AG04449 (cell line): ENCODE measurements at regions of chr6 and their contacts with region 1.

Region 1: DNA sequence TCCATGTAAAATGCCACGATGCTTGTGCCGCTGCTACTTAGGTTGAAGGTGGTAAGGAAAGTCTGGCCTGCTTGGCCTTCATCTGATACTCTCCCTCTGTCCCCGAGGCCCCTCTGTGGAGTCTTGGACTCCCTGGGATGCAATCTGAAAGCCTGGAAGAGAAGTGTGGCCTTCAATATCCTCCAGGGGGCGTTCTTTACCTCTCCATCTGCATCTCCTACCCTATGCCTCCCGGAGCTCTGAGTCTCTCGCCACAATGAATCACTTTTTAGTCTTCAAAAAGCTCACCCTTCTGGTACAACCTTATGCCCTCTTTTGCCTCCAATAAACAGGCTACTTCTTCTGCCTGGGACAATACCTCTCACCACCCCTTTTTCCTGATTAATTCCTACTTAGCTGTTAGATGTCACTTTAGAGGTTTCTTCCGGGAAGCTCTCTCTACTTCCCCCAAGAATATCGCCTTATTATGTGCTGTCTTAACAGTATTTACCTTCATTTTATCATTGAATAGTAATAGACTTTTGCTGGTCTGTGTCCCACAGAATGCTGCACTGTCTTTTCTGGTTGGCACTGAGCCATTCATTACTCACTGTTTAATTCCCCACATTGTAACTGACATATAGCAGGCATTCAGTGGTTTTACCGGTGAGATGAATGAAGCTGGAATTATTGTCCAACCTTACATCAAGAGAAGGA is 13.9 kb upstream of the ATG5 start:
- DNase-seq: peak; percentile 24
- H3K4me3 ChIP-seq: no peak overlapping the region
- CTCF ChIP-seq: peak; percentile 81

Region 2: DNA sequence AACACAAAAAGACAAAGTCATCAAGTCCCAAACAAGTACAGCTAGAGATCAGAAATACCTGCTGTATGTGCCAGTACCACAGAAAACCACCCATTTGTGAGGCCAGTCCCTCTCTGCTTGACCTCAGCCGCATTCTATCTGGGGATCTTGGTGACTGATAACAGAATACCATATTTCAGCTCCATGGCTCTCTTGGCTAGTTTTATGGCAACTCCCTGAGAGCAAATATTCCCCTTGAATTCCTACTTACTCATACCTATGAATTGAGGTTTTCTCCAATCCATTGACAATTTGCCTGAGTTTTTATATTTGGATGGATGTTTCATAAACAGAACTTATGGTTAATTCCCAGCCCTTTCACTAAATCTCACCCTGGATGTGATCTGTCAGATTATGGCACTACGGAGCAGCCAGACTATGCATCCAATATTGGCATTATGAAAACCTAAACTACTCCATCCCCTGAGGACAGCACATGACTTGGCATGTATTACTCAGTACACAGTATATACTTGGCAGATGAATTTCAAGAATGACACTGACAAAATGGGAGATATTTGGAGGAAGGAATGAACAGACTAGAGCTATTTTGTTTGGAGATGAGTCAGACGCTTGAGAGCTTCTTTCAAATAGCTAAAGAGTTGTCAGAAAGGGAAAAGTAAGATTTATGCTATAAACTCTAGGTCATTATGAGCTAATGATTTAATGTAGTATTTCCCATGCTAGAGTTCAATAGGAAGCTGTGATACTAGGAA is 157.6 kb before region 1 on chr6:
- CTCF ChIA-PET with region 1: no interaction called
- POLR2A ChIA-PET with region 1: no interaction called
- DNase-seq: peak; percentile 83
- H3K4me3 ChIP-seq: no peak overlapping the region
- CTCF ChIP-seq: no peak

Region 3: GRCh38 chr6:106325336-106326178 is 13.9 kb before region 1 on chr6 and contains the start of gene ATG5:
- CTCF ChIA-PET with region 1: interaction called, 32 read pairs
- POLR2A ChIA-PET with region 1: no interaction called
- DNase-seq: peak; percentile 92
- H3K4me3 ChIP-seq: peak within 1 kb of the TSS; percentile 97
- CTCF ChIP-seq: no peak

Region 4: DNA sequence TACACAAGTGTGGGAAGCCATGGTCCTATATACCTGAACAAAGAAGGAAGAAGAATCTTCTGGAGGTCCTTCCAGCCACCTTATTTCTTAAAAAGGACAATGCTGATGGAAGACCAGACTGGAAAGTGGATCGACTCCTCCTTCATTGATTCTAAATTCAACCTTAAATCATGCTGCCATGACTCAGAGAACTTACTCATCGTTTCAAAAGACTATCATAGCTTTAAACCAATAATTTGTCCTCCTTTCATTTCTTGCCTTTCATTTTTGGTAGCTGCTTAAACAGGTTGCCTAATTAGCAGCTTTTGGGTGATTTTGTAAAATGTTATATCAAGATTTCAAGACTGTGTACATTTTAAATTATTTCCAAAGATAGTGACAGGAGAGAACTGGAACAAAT is 229.0 kb after region 1 on chr6:
- CTCF ChIA-PET with region 1: interaction called, 19 read pairs
- POLR2A ChIA-PET with region 1: no interaction called
- DNase-seq: no peak
- H3K4me3 ChIP-seq: no peak overlapping the region
- CTCF ChIP-seq: no peak

Region 5: GRCh38 chr6:106910999-106911949 is 571.8 kb after region 1 on chr6:
- CTCF ChIA-PET with region 1: no interaction called
- POLR2A ChIA-PET with region 1: no interaction called
- DNase-seq: no peak
- H3K4me3 ChIP-seq: no peak overlapping the region
- CTCF ChIP-seq: no peak

Region 6: GRCh38 chr6:107080036-107080435 is 740.6 kb after region 1 on chr6:
- CTCF ChIA-PET with region 1: no interaction called
- POLR2A ChIA-PET with region 1: no interaction called
- DNase-seq: no peak
- H3K4me3 ChIP-seq: no peak overlapping the region
- CTCF ChIP-seq: peak; percentile 17